ENCODE measurements at regions of chr9 and their contacts with region 1.

Region 1: GRCh38 chr9:31119882-31120454 is 1264.5 kb upstream of the ACO1 start:
- DNase-seq: no peak
- ATAC-seq: no peak
- H3K4me3 ChIP-seq: no peak overlapping the region
- H3K27ac ChIP-seq: no peak overlapping the region
- H3K4me1 ChIP-seq: no peaks in the 10 kb centered on the region
- H3K27me3 ChIP-seq: no peaks in the 10 kb centered on the region
- CTCF ChIP-seq: peak; percentile 28 to 55 (median 46)
- POLR2A ChIP-seq: no peak

Region 2: GRCh38 chr9:31542384-31543055 is 422.6 kb after region 1 on chr9:
- intact Hi-C with region 1: loop called in 1 of 10 experiments (anchors 10 kb)
- DNase-seq: no peak
- ATAC-seq: peak in 2 of 4 donors; percentile 68 to 85
- H3K4me3 ChIP-seq: no peak overlapping the region
- H3K27ac ChIP-seq: no peak overlapping the region
- H3K4me1 ChIP-seq: peaks cover 0 to 4% (median 0%) of the 10 kb centered on the region in 12 donors
- H3K27me3 ChIP-seq: no peaks in the 10 kb centered on the region
- CTCF ChIP-seq: peak in 4 of 12 donors; percentile 17 to 22 (median 18)
- POLR2A ChIP-seq: no peak

Region 3: GRCh38 chr9:31799953-31800609 is 680.1 kb after region 1 on chr9:
- intact Hi-C with region 1: loop called in 2 of 10 experiments (anchors 10 kb)
- DNase-seq: no peak
- ATAC-seq: no peak
- H3K4me3 ChIP-seq: no peak overlapping the region
- H3K27ac ChIP-seq: no peak overlapping the region
- H3K4me1 ChIP-seq: no peaks in the 10 kb centered on the region
- H3K27me3 ChIP-seq: no peaks in the 10 kb centered on the region
- CTCF ChIP-seq: peak in 9 of 12 donors; percentile 6 to 39 (median 27)
- POLR2A ChIP-seq: no peak

Region 4: GRCh38 chr9:32251539-32251938 is 1131.6 kb after region 1 on chr9:
- intact Hi-C with region 1: loop called in 2 of 10 experiments (anchors 10 kb)
- DNase-seq: peak in 3 of 5 donors; percentile 11 to 26 (median 22)
- ATAC-seq: peak in 2 of 4 donors; percentile 53 to 78
- H3K4me3 ChIP-seq: no peak overlapping the region
- H3K27ac ChIP-seq: no peak overlapping the region
- H3K4me1 ChIP-seq: no peaks in the 10 kb centered on the region
- H3K27me3 ChIP-seq: peaks cover 0 to 3% (median 0%) of the 10 kb centered on the region in 9 donors
- CTCF ChIP-seq: peak; percentile 33 to 69 (median 56)
- POLR2A ChIP-seq: no peak

Measured in heart left ventricle (tissue), 16 donors.